ENCODE measurements at regions of chr11 and their contacts with region 1.

Region 1: DNA sequence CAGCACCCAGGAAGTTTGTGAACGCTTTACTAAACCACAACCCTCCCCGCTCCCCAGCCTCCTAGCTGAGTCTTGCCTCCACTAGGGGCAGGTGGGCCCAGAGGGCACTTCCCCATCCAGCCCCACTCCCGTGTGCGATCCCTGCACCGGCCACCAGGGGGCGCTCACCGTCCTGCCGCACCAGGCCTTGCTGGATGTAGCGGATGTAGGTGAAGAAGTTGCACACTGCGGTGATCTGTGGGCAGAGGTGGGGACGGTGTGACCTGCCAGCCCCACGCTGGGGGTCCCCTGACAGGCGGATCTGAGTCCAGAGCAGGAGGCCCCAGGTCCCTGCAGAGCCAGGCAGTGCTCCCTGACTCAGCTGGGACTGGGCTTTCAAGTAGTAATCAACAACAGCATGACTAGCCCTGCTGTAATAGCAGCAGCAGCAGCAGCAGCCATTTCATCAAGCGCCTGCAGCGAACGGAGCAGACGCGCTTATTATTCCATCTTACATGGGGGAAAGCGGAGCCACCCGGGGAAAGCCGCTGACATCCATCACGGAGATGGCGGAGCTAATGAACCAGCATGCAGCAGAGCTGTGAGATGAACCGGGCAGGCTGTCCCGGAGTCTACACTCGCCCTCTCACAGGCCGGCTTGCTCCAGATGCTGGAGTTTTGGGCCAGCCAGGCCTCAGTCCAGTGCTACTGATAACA is 7.9 kb upstream of the FADS3 start:
- DNase-seq: peak; percentile 95
- ATAC-seq: peak; percentile 95
- H3K4me3 Mint-ChIP-seq: no peak overlapping the region
- H3K27ac Mint-ChIP-seq: no peak overlapping the region
- H3K4me1 Mint-ChIP-seq: peaks cover 6% of the 10 kb centered on the region
- H3K27me3 Mint-ChIP-seq: no peaks in the 10 kb centered on the region
- CTCF ChIP-seq: peak; percentile 100

Region 2: DNA sequence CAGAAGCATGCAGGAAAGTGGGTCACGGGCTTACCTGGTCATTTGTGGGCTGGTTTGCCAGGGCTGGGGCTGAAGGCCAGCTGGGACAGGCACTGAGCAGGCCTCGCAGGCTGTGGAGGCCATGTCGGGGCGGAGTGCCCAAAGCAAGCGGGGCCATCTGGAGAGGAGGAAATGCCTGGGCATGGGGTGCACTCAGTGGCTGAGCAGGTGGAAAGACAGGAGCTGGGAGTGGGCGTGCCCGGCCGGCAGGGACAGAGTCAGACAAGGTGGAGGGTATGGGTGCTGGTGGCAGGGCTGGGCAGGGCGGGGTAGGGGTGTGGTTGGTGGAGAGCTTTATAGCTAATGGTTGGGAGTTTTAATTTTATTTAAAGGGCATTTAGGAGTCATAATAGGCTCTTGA is 191.7 kb before region 1 on chr11:
- CTCF ChIA-PET with region 1: no interaction called
- POLR2A ChIA-PET with region 1: no interaction called
- intact Hi-C with region 1: no loop called
- DNase-seq: no peak
- ATAC-seq: no peak
- H3K4me3 Mint-ChIP-seq: no peak overlapping the region
- H3K27ac Mint-ChIP-seq: no peak overlapping the region
- H3K4me1 Mint-ChIP-seq: peaks cover 3% of the 10 kb centered on the region
- H3K27me3 Mint-ChIP-seq: no peaks in the 10 kb centered on the region
- CTCF ChIP-seq: no peak

Region 3: GRCh38 chr11:61792310-61793085 is 106.8 kb before region 1 on chr11 and contains the starts of genes FEN1 and TMEM258:
- CTCF ChIA-PET with region 1: interaction called, 32 read pairs
- POLR2A ChIA-PET with region 1: interaction called, 3 read pairs
- intact Hi-C with region 1: no loop called
- DNase-seq: peak; percentile 94
- ATAC-seq: peak; percentile 87
- H3K4me3 Mint-ChIP-seq: peak within 1 kb of the TSS; percentile 89
- H3K27ac Mint-ChIP-seq: peak within 1 kb of the TSS; percentile 100
- H3K4me1 Mint-ChIP-seq: peaks cover 57% of the 10 kb centered on the region
- H3K27me3 Mint-ChIP-seq: no peaks in the 10 kb centered on the region
- CTCF ChIP-seq: no peak
- total RNA-seq, gene FEN1: 109 to 114 TPM
- total RNA-seq, gene TMEM258: 162 to 170 TPM

Region 4: GRCh38 chr11:61871158-61871597 is 28.1 kb before region 1 on chr11:
- CTCF ChIA-PET with region 1: interaction called, 30 read pairs
- POLR2A ChIA-PET with region 1: no interaction called
- intact Hi-C with region 1: no loop called
- DNase-seq: peak; percentile 80
- ATAC-seq: peak; percentile 97
- H3K4me3 Mint-ChIP-seq: peak overlapping the region; percentile 48
- H3K27ac Mint-ChIP-seq: no peak overlapping the region
- H3K4me1 Mint-ChIP-seq: peaks cover 2% of the 10 kb centered on the region
- H3K27me3 Mint-ChIP-seq: no peaks in the 10 kb centered on the region
- CTCF ChIP-seq: peak; percentile 95

Region 5: GRCh38 chr11:61912530-61912898 is 13.2 kb after region 1 on chr11:
- CTCF ChIA-PET with region 1: interaction called, 45 read pairs
- POLR2A ChIA-PET with region 1: no interaction called
- intact Hi-C with region 1: no loop called
- DNase-seq: no peak
- ATAC-seq: no peak
- H3K4me3 Mint-ChIP-seq: no peak overlapping the region
- H3K27ac Mint-ChIP-seq: no peak overlapping the region
- H3K4me1 Mint-ChIP-seq: peaks cover under 1% of the 10 kb centered on the region
- H3K27me3 Mint-ChIP-seq: peaks cover 19% of the 10 kb centered on the region
- CTCF ChIP-seq: no peak

Region 6: DNA sequence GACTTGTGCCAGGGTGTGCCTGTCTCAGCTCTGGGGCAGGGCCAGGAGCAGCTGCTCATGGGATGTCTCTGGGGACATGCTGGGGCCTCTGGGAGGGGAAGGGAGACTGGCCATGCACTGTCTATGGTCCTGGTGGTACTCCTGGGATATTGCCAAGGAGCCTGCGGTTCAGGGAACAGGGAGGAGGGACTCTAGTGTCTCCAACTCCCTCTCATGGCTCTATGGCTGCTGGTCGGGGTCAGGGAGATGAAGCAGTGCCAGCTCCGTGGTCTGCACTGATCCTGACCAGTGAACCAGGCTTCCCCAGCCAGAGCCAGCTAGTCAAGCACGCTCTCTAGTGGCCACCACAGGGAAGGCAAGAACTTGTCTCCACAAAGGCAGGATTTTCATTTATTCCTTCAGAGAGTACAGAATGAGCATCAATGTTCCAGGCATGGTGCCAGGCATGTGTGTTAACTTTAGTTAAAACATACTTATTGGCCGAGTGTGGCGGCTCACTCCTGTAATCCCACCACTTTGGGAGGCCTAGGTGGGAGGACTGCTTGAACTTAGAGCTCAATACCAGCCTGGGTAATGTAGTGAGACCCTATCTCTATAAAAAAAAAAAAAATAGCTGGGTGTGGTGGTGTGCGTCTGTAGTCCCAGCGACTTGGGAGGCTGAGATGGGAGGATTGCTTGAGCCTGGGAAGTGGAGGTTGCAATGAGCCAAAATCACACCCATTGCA is 48.4 kb after region 1 on chr11:
- CTCF ChIA-PET with region 1: interaction called, 215 read pairs
- POLR2A ChIA-PET with region 1: no interaction called
- intact Hi-C with region 1: loop called (anchors 5 kb)
- DNase-seq: peak; percentile 82
- ATAC-seq: peak; percentile 77
- H3K4me3 Mint-ChIP-seq: no peak overlapping the region
- H3K27ac Mint-ChIP-seq: no peak overlapping the region
- H3K4me1 Mint-ChIP-seq: peaks cover 7% of the 10 kb centered on the region
- H3K27me3 Mint-ChIP-seq: peaks cover 3% of the 10 kb centered on the region
- CTCF ChIP-seq: peak; percentile 80

Region 7: GRCh38 chr11:62054484-62055121 is 155.3 kb after region 1 on chr11:
- CTCF ChIA-PET with region 1: interaction called, 18 read pairs
- POLR2A ChIA-PET with region 1: no interaction called
- intact Hi-C with region 1: no loop called
- DNase-seq: peak; percentile 24
- ATAC-seq: no peak
- H3K4me3 Mint-ChIP-seq: no peak overlapping the region
- H3K27ac Mint-ChIP-seq: no peak overlapping the region
- H3K4me1 Mint-ChIP-seq: no peaks in the 10 kb centered on the region
- H3K27me3 Mint-ChIP-seq: no peaks in the 10 kb centered on the region
- CTCF ChIP-seq: no peak

Measured in activated CD8-positive, alpha-beta T cell treated with anti-CD3 and anti-CD28 coated beads for 36 hours (primary cell).